ENCODE measurements at regions of chr3 and their contacts with region 1.

Region 1: DNA sequence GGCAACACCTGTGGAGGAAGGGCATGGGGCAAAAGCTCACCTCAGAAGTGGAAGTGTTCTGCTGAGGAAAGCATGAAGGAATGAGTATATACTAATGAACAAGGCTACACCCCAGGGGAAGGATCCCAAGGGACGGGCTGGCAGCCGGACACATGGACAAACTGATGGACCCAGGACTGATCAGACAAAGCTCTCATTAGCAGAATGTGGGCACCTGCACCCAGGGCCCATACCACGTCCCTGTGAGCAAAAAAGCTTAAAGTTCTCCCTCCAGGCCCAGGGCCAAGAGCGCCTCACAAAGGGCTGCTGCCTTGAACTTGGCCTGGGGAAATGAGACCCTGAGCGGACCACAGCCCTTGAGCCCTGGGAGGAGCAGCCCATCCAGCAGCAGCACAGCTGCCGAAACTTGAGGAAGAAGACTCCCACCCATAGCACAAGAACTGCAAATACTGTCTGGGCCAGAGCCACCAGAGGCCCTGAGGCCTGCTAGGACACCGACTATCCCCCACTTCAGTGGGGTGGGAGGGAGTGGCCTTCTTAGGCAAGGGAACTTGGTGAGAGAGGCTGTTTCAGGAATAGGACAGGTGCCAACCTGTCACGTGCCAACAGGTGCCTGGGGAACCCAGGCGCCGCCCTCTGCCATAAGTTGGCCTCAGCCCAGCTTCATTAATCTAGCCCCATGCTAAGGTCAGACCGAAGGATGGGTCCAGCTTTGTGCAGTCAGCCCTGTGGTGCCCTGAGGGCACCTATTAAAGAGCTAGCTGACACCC is 2.3 kb upstream of the GMPPB start:
- DNase-seq: no peak
- H3K4me3 ChIP-seq: no peak overlapping the region
- H3K27ac ChIP-seq: peak overlapping the region in 1 of 2 donors; percentile 30
- H3K4me1 ChIP-seq: peaks cover 9 to 10% of the 10 kb centered on the region in 2 donors
- H3K27me3 ChIP-seq: no peaks in the 10 kb centered on the region
- CTCF ChIP-seq: no peak
- POLR2A ChIP-seq: no peak

Region 2: DNA sequence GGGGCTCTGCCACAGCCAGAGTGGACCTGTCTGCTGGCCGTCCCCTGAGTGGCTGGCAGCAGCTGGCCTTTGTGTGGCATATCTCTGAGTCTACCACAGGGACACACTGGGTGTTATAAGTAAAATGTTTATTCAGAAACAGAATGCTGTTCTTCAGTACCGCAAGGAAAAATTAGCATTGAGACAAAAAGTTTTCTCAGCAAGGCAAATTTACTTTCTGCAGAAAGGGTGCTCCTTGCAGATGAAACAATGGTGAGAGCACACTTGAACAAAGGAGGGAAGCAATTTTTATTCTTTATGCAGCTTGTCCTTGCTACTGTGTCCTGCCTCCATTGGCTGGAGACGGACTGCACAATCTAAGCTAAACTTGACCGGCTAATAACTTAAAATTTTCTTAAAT is 1108.5 kb before region 1 on chr3:
- intact Hi-C with region 1: loop called (anchors 5 kb)
- DNase-seq: no peak
- H3K4me3 ChIP-seq: no peak overlapping the region
- H3K27ac ChIP-seq: no peak overlapping the region
- H3K4me1 ChIP-seq: no peaks in the 10 kb centered on the region
- H3K27me3 ChIP-seq: no peaks in the 10 kb centered on the region
- CTCF ChIP-seq: no peak
- POLR2A ChIP-seq: no peak

Measured in breast epithelium (tissue), 4 donors.